ENCODE measurements at regions of chr6 and their contacts with region 1.

Region 1: DNA sequence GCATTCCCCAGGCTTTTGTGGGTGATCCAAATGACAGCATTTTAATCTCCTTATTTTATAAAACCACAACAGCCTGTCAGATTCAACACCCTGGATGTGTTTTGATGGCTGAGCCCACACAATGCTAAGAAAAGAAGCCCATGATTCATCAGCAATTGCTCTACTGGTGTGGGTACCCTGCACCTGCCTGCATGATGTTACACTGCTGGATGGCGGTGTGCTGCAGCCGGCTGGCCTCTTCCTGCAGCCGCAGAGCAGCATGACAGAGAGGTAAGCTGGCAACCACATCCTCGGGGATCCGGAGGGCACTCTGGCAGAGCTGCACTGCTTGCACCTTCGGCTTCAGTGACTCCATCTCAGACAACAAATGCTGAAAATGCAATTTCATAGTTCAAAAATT is 327.5 kb downstream of the SYNE1 start:
- DNase-seq: no peak
- H3K4me3 ChIP-seq: no peak overlapping the region
- H3K4me3 Mint-ChIP-seq: no peak overlapping the region
- H3K27ac Mint-ChIP-seq: no peak overlapping the region
- H3K4me1 ChIP-seq: peaks cover 16% of the 10 kb centered on the region
- H3K4me1 Mint-ChIP-seq: peaks cover 18% of the 10 kb centered on the region
- H3K27me3 ChIP-seq: no peaks in the 10 kb centered on the region
- H3K27me3 Mint-ChIP-seq: no peaks in the 10 kb centered on the region
- CTCF ChIP-seq: no peak

Region 2: GRCh38 chr6:152277826-152278329 is 31.8 kb before region 1 on chr6:
- CTCF ChIA-PET with region 1: no interaction called
- POLR2A ChIA-PET with region 1: no interaction called
- intact Hi-C with region 1: loop called (anchors 2 kb)
- DNase-seq: peak; percentile 54 to 61
- H3K4me3 ChIP-seq: peak overlapping the region; percentile 6; the same call in 1 of the 2 replicates
- H3K4me3 Mint-ChIP-seq: peak overlapping the region; percentile 62
- H3K27ac Mint-ChIP-seq: peak overlapping the region; percentile 58
- H3K4me1 ChIP-seq: peaks cover 17% of the 10 kb centered on the region
- H3K4me1 Mint-ChIP-seq: peaks cover 7% of the 10 kb centered on the region
- H3K27me3 ChIP-seq: no peaks in the 10 kb centered on the region
- H3K27me3 Mint-ChIP-seq: no peaks in the 10 kb centered on the region
- CTCF ChIP-seq: no peak

Region 3: DNA sequence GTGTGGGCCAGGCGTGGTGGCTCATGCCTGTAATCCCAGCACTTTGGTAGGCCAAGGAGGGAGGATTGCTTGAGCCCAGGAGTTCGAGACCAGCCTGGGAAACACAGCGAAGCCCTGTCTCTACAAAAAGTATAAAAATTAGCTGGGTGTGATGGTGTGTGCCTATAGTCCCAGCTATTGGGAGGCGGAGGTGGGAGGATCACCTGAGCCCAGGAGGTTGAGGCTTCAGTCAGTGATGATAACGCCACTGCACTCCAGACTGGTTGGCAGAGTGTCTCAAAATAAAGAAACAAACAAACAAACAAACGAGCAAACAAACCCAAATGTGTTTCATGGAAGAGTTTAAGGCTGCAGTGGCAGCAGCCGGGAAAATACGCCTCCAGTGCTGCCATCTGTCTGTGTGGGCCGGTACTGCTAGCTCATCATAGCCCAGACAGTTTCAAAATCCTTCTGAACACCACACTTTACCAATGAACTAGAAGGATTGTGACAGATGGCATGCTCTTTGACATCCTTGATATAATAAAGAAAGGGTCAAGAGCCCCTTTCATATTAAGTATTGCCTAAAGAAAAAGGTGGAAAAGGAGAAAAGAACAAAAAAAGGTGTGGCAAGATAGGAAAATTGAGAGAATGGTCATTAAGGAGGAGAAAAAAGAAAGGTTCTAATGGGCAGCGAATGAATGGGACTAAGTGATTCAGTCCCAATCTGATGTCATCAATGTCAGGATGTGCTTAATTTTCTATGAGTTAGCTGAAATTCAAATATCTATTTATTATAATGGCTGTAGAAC is 28.9 kb after region 1 on chr6:
- CTCF ChIA-PET with region 1: interaction called, 4 read pairs
- POLR2A ChIA-PET with region 1: no interaction called
- intact Hi-C with region 1: loop called (anchors 1 kb)
- DNase-seq: peak in 1 of 2 experiments; percentile 59
- H3K4me3 ChIP-seq: no peak overlapping the region
- H3K4me3 Mint-ChIP-seq: no peak overlapping the region
- H3K27ac Mint-ChIP-seq: no peak overlapping the region
- H3K4me1 ChIP-seq: peaks cover 22% of the 10 kb centered on the region
- H3K4me1 Mint-ChIP-seq: peaks cover 24% of the 10 kb centered on the region
- H3K27me3 ChIP-seq: no peaks in the 10 kb centered on the region
- H3K27me3 Mint-ChIP-seq: no peaks in the 10 kb centered on the region
- CTCF ChIP-seq: peak; percentile 75 to 77

Region 4: DNA sequence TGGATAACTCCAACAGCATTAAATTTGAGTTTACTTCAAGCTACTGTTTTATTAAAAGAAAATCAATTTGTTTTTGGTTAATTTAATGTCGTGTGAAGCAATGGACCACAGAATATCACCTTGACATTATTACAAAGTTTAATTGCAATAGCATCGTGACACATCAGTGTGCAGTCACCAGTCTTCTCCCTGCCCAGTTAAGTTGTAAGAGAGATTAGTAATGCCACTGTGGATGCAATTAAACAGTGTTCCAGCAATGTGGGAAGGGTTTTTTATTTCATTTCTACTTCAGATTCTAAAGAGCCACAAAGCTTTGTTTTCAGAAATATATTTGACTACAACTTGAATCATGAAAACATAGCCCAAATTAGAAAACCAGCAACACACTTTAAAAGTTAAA is 198.8 kb after region 1 on chr6:
- CTCF ChIA-PET with region 1: no interaction called
- POLR2A ChIA-PET with region 1: no interaction called
- intact Hi-C with region 1: no loop called
- DNase-seq: no peak
- H3K4me3 ChIP-seq: no peak overlapping the region
- H3K4me3 Mint-ChIP-seq: no peak overlapping the region
- H3K27ac Mint-ChIP-seq: no peak overlapping the region
- H3K4me1 ChIP-seq: no peaks in the 10 kb centered on the region
- H3K4me1 Mint-ChIP-seq: no peaks in the 10 kb centered on the region
- H3K27me3 ChIP-seq: peaks cover 1% of the 10 kb centered on the region; the same call in 1 of the 2 replicates
- H3K27me3 Mint-ChIP-seq: peaks cover 9% of the 10 kb centered on the region
- CTCF ChIP-seq: no peak